Naive thymus-derived CD4-positive, alpha-beta T cell (primary cell): ENCODE measurements at regions of chr20 and their contacts with region 1.

Region 1: DNA sequence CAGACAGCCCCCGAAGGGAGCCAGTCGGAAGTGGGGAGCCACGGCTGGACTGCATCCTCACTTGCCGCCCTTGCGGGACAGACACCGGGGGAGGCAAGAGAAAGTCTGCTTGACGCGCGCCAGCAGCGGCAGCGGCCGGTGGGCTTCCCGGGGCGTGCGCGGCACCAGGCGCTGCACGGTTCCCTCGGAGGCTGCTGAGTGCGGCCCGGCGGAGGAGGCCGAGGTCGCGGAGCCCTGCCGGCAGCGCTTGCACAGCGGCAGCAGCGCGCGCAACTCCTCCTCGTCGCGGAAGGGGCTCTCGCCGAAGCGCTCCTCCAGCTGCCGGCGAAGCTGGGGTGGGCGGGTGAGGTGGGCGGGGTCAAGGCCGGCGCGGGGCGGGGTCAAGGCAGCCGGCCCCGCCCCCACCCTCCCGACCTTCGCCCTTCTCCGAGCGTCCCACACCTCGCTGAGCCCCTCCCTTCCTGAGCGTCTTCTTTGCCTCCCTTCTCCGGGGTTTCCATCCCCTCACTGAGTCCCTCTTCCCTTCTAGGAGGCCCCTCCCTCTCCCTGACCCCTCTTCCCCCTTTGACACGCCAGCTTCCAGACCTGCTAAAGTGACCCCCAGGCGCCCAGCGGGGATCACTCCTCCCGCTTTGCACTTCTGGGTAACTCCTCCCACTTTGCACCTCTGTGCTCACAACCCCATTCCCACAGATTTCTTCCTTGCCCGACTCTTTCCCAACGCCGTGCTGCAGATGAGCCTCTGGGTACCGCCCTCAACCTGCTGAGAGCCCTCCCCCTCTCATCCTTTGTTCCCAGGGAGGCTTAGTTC is 8.8 kb downstream of the DUSP15 start:
- DNase-seq: peak; percentile 18 to 63 (median 49)
- ATAC-seq: peak; percentile 88
- H3K4me3 ChIP-seq: peak overlapping the region; percentile 48
- H3K4me3 Mint-ChIP-seq: peak overlapping the region; percentile 44 to 88 (median 69)
- H3K27ac ChIP-seq: no peak overlapping the region
- H3K27ac Mint-ChIP-seq: peak overlapping the region in 1 of 9 donors; percentile 24
- H3K4me1 ChIP-seq: peaks cover 4 to 12% of the 10 kb centered on the region in 2 donors
- H3K4me1 Mint-ChIP-seq: peaks cover 5 to 22% (median 11%) of the 10 kb centered on the region in 7 donors
- H3K27me3 ChIP-seq: peaks cover 0 to 10% of the 10 kb centered on the region in 2 donors
- H3K27me3 Mint-ChIP-seq: peaks cover 17 to 51% (median 31%) of the 10 kb centered on the region in 5 donors

Region 2: DNA sequence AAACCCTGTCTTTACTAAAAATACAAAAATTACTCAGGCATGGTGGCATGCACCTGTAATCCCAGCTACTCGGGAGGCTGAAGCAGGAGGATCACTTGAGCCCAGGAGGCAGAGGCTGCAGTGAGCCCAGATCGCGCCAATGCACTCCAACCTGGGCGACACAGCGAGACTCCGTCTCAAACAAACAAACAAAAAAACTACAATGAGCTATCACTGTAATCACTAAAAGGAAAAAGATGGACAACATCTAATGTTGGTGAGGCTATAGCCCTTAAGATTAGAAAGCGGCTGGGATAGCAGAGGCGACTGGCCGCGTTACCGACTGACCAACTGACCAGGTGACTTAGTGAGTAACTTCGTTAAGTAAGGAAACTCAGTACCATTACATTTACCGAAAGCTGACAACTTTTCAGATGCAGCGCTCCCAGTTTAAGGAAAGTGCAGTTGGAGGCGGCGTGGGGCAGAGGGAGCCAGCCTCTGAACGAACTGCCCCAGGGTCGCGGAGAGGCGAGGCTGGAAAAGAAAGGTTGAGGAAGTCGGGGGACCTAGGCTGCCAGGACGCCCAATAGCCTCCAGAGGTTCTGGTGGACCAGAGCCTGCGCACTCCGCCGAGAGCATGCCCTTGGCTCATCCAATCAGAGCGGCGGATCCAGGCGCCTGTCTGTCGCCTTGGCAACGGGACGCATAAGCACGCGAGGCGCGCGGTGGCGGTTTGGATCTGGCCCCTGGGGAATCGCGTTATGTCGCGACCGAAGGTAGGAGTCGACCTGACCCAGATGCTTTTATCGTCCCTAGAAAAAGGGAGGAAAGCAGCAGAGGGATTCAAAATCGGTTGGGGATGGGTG is 17.8 kb after region 1 on chr20:
- CTCF ChIA-PET with region 1: interaction called, 6 read pairs
- POLR2A ChIA-PET with region 1: no interaction called
- intact Hi-C with region 1: loop called (anchors 1 to 2 kb)
- DNase-seq: peak; percentile 55 to 77 (median 71)
- ATAC-seq: peak; percentile 93
- H3K4me3 ChIP-seq: peak overlapping the region; percentile 68
- H3K4me3 Mint-ChIP-seq: peak overlapping the region; percentile 89 to 97 (median 94)
- H3K27ac ChIP-seq: peak overlapping the region; percentile 27
- H3K27ac Mint-ChIP-seq: peak overlapping the region; percentile 32 to 92 (median 79)
- H3K4me1 ChIP-seq: no peaks in the 10 kb centered on the region
- H3K4me1 Mint-ChIP-seq: peaks cover 6 to 17% (median 12%) of the 10 kb centered on the region in 7 donors
- H3K27me3 ChIP-seq: no peaks in the 10 kb centered on the region
- H3K27me3 Mint-ChIP-seq: peaks cover 0 to 53% (median under 1%) of the 10 kb centered on the region in 5 donors

Region 3: GRCh38 chr20:31968291-31969126 is 107.0 kb after region 1 on chr20:
- CTCF ChIA-PET with region 1: no interaction called
- POLR2A ChIA-PET with region 1: no interaction called
- intact Hi-C with region 1: loop called in 1 of 2 experiments (anchors 1 kb)
- DNase-seq: peak; percentile 74 to 93 (median 85)
- ATAC-seq: peak; percentile 98
- H3K4me3 ChIP-seq: no peak overlapping the region
- H3K4me3 Mint-ChIP-seq: peak overlapping the region; percentile 83 to 91 (median 88)
- H3K27ac ChIP-seq: no peak overlapping the region
- H3K27ac Mint-ChIP-seq: peak overlapping the region in 3 of 9 donors; percentile 46 to 75 (median 57)
- H3K4me1 ChIP-seq: no peaks in the 10 kb centered on the region
- H3K4me1 Mint-ChIP-seq: peaks cover 0 to 9% (median 9%) of the 10 kb centered on the region in 7 donors
- H3K27me3 ChIP-seq: peaks cover 4 to 5% of the 10 kb centered on the region in 2 donors
- H3K27me3 Mint-ChIP-seq: peaks cover 46 to 81% (median 60%) of the 10 kb centered on the region in 5 donors